ENCODE measurements at regions of chr14 and their contacts with region 1.

Region 1: DNA sequence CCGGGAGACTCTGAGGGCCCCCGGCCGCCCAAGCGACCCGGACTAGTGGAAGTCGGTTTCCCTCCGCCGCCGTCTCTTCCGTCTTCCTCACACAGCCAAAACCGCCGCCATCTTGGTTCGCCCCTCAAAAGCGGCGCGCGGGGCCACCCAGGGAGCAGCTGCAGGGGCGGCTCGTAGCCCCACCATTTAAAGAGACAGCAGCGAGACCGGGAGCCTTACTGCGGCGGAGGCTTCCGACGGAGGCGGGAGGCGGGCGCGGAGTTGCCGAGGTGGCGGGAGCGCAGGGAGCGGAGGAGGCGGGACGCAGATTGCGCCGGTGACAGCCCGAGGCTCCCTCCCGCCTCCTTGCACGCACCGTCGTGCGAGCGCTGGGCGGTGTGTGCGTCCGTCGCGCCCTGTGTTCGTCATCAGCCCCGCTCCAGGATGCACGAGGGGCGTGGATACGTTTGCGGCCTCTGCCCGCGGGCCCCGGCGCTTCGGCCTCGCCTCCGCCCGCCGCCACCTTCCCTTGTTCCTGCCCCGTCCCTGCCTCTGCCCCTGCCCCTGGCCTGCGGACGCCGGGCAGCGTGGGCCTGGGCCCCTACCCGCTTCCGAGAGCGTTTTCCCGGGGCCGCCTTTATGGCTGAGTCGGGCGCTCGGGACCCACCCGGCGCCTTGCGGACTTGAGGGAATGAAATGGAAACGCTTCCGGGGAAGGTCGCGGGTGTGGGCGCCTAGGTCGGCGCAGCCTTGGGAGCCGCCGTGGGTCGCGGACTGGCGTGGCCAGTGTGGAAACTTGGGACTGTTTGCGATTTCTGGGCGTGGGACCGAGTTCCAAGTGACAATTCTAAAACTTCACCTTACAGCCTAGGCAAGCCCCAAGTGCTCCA is at the start of gene PPP4R3A:
- DNase-seq: peak; percentile 95
- ATAC-seq: peak; percentile 88
- H3K4me3 Mint-ChIP-seq: peak within 1 kb of the TSS; percentile 98
- H3K27ac Mint-ChIP-seq: peak within 1 kb of the TSS; percentile 100
- H3K4me1 Mint-ChIP-seq: peaks cover 15% of the 10 kb centered on the region
- H3K27me3 Mint-ChIP-seq: peaks cover 2% of the 10 kb centered on the region
- total RNA-seq, gene PPP4R3A: 138 to 142 TPM

Region 2: GRCh38 chr14:91429385-91429784 is 81.0 kb before region 1 on chr14:
- POLR2A ChIA-PET with region 1: no interaction called
- DNase-seq: no peak
- ATAC-seq: no peak
- H3K4me3 Mint-ChIP-seq: no peak overlapping the region
- H3K27ac Mint-ChIP-seq: no peak overlapping the region
- H3K4me1 Mint-ChIP-seq: peaks cover 8% of the 10 kb centered on the region
- H3K27me3 Mint-ChIP-seq: no peaks in the 10 kb centered on the region

Region 3: GRCh38 chr14:91493169-91493568 is 17.2 kb before region 1 on chr14:
- POLR2A ChIA-PET with region 1: interaction called, 10 read pairs
- DNase-seq: no peak
- ATAC-seq: no peak
- H3K4me3 Mint-ChIP-seq: no peak overlapping the region
- H3K27ac Mint-ChIP-seq: no peak overlapping the region
- H3K4me1 Mint-ChIP-seq: peaks cover 52% of the 10 kb centered on the region
- H3K27me3 Mint-ChIP-seq: no peaks in the 10 kb centered on the region

Region 4: DNA sequence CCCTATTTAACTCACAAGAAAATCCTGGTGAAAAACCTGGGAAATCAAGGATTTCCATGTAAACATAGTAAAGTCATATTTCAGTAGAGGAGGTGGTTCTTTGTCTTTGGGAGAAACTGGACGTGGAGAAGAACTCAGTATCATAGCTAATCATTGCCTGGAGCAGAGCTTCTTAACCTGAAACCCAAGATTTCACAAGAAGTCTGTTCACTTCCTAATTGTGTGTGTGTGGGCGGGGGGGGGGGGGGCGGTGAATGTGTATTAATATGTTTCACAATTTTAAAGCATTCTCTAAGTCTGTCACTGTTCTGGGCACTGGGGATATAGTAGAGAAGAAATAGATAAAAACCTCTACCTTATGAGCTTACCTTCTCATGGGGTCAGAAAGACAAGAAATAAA is 96.4 kb after region 1 on chr14:
- POLR2A ChIA-PET with region 1: no interaction called
- DNase-seq: no peak
- ATAC-seq: no peak
- H3K4me3 Mint-ChIP-seq: no peak overlapping the region
- H3K27ac Mint-ChIP-seq: no peak overlapping the region
- H3K4me1 Mint-ChIP-seq: no peaks in the 10 kb centered on the region
- H3K27me3 Mint-ChIP-seq: peaks cover 4% of the 10 kb centered on the region